Aorta (tissue), 5 donors: ENCODE measurements at regions of chr5 and their contacts with region 1.

Region 1: GRCh38 chr5:96336351-96336985 is 96.6 kb downstream of the PCSK1 start:
- DNase-seq: peak in 1 of 2 donors; percentile 70
- ATAC-seq: peak; percentile 86
- H3K4me3 ChIP-seq: no peak overlapping the region
- H3K27ac ChIP-seq: no peak overlapping the region
- H3K4me1 ChIP-seq: peaks cover 5 to 20% of the 10 kb centered on the region in 2 donors
- H3K27me3 ChIP-seq: no peaks in the 10 kb centered on the region

Region 2: DNA sequence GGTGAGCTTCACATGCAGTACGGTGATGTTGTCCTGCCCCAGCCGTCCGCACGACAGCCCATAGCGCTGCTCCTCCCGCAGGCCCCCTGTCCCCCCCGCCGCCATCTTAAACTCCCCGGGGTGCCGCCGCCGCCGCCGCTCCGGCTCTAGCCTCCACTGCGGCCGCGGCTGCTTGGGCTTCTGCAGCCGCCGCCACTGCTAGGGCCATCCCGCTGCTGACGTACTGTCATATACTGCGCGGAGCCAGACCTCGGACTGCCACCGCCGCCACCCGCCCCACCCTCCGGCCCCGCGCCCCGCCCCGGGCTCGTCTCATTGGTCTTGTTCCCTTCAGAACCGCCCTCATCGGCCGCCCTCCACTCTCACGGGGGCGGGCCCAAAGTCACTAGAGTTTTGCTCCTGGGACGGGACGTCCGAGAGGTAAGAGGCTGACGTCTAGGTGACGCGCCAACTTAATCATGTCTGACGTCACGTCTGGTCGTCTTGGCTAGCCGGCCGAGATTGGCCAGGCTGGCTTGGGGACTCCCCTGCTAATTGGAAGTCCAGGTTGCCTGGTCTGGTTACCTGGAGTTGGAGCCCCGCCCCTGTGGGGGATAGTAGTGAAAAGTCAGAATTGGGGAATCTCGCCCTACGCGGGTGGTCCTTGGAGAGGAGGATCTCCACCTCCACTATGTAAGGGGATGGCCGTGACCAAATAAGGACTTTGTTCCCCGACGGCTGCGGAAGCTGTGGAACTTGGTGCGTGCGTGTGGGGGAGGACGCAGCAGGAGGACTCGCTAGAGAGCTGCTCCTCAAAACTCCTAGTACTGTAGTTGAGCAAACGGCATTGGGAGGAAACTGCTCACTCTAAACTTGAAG is 374.6 kb before region 1 on chr5 and contains the start of gene ELL2:
- intact Hi-C with region 1: loop called (anchors 1 to 2 kb)
- DNase-seq: peak; percentile 99 to 100
- ATAC-seq: peak; percentile 93
- H3K4me3 ChIP-seq: peak within 1 kb of the TSS; percentile 79 to 86
- H3K27ac ChIP-seq: peak within 1 kb of the TSS; percentile 94 to 96
- H3K4me1 ChIP-seq: no peaks in the 10 kb centered on the region
- H3K27me3 ChIP-seq: no peaks in the 10 kb centered on the region
- total RNA-seq, gene ELL2: 107 to 207 TPM

Region 3: DNA sequence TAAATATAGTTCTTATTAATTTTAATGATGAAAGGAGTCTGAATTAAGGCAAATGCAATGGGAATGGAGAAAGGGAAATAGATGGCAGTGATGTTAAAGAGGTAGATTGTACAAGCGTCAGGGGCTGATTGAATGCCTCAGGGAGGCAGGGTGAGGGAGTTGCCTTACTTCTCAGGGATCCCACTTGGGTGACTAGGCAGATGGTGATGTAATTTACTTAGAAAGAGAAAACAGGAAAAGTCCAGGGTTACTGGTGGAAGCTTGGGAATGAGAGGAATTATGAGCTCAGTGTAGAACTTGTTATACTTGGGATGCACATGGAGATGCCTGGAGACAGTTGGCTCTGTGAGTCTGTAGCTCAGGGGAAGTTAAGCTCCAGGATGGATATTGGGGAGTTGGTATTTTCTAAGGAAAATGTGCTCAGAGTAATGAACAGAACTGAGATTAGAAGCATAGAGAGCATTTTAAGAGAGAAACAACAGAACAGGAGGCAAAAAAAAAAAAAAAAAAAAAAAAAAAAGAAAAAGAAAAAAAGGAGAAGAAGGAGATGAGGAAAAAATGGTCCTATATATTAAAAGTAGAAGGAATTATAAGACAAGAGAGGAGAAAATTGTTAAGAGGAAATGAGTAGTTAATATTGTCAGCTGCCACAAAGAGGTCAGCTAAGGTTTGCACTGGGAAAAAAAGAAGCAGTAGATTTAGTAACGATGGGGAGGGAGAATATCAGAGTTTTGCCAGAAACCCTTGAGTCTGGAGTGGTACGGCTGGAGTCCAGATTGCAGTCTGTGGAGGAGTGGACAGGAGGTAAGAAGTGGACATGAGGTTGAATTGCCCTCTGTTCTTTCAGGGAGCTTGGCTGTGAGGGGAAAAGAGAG is 286.8 kb before region 1 on chr5:
- intact Hi-C with region 1: loop called in 1 of 2 experiments (anchors 10 kb)
- DNase-seq: no peak
- ATAC-seq: peak; percentile 25
- H3K4me3 ChIP-seq: no peak overlapping the region
- H3K27ac ChIP-seq: peak overlapping the region in 1 of 2 donors; percentile 46
- H3K4me1 ChIP-seq: peaks cover 0 to 4% of the 10 kb centered on the region in 2 donors
- H3K27me3 ChIP-seq: no peaks in the 10 kb centered on the region

Region 4: DNA sequence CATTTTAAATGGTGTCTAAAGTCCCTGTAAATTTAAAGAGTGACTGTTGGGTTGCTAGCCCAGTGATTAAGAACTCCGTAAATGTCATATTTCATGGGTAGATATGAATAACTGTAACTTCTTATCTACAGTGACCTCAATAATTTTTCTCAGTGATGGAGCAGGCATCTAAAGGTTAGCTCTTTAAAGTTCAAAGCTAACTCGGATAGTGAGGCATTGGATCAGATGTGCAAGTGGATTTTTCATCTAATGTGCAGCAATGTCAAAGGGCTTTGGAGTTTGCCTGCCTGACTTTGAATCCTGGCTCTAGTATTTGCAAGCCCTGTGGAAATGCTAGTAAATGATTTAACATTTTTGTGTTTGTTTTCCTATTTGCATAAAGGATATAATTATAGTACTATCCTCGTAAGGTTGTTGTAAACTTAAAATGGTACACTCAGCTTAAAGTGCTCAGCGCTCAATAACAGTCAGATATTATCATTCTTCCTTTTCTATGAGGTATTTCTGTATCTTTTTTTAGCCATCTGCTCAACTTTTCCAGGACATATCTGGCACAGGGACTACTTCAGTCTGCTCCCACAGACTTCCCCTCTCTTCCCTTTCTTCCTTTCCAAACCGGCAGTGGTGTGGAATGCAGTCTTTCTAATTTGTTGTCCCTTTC is 211.1 kb before region 1 on chr5:
- intact Hi-C with region 1: loop called in 1 of 2 experiments (anchors 10 kb)
- DNase-seq: no peak
- ATAC-seq: peak; percentile 57
- H3K4me3 ChIP-seq: peak overlapping the region; percentile 14 to 15
- H3K27ac ChIP-seq: no peak overlapping the region
- H3K4me1 ChIP-seq: peaks cover 0 to 2% of the 10 kb centered on the region in 2 donors
- H3K27me3 ChIP-seq: no peaks in the 10 kb centered on the region

Region 5: GRCh38 chr5:96256778-96257470 is 79.5 kb before region 1 on chr5:
- intact Hi-C with region 1: loop called (anchors 2 to 5 kb)
- DNase-seq: no peak
- ATAC-seq: no peak
- H3K4me3 ChIP-seq: no peak overlapping the region
- H3K27ac ChIP-seq: peak overlapping the region in 1 of 2 donors; percentile 71
- H3K4me1 ChIP-seq: peaks cover 5 to 12% of the 10 kb centered on the region in 2 donors
- H3K27me3 ChIP-seq: no peaks in the 10 kb centered on the region

Region 6: GRCh38 chr5:96624636-96625035 is 288.2 kb after region 1 on chr5:
- intact Hi-C with region 1: no loop called
- DNase-seq: no peak
- ATAC-seq: no peak
- H3K4me3 ChIP-seq: no peak overlapping the region
- H3K27ac ChIP-seq: no peak overlapping the region
- H3K4me1 ChIP-seq: no peaks in the 10 kb centered on the region
- H3K27me3 ChIP-seq: no peaks in the 10 kb centered on the region